ENCODE measurements at regions of chr16 and their contacts with region 1.

Region 1: GRCh38 chr16:74998481-74999218 is at the start of gene ZNRF1:
- DNase-seq: peak; percentile 89 to 95 (median 92)
- H3K4me3 ChIP-seq: peak within 1 kb of the TSS; percentile 73 to 83 (median 74)
- H3K27ac ChIP-seq: peak within 1 kb of the TSS; percentile 83 to 84
- H3K4me1 ChIP-seq: peaks cover 0 to 17% (median 0%) of the 10 kb centered on the region in 3 donors
- H3K27me3 ChIP-seq: no peaks in the 10 kb centered on the region
- CTCF ChIP-seq: peak; percentile 74
- total RNA-seq, gene ZNRF1: 23.1 TPM

Region 2: DNA sequence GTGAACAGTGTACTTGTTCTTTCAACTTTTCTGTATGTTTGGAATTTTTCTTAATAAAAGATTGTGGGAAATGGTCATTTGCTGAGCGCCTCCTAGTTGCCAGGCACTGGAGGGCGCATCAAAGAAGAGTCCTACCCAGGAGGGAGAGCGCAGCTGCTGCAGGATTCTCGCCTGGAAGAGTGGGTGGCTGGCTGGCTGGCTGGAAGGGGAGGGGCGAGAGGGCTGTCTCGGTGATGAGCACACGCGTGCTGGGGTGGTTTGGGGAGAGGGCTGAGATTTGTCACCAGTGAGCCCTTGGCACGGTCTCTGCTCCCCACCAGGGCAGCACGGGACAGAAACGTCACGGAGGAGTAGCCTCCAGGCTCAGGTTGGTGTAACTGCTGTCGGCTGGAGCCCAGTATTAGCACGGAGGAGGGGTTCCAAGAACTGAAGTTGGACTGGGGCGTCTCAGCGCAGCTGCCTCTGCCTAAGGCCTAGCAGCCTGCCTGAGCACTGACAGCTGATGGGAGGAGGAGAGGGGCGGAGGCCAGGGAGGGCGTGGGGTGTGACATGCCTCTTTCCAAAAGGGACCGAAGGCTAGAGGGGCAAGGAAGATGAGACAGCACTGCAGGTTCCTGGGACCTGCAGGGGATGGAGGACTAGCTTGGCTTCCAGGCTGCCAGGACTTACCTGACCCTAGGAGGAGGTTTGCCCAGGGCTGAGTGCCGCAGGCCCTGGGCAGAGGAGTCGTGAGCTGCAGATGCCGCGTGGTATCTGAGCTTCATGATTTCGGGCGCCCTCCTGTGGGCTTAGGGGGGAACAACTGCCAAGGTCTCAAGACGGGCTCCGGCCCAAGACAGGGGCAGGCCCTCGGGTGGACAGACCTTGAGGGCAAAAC is 112.2 kb after region 1 on chr16:
- intact Hi-C with region 1: loop called (anchors 5 kb)
- DNase-seq: peak; percentile 89 to 97 (median 93)
- H3K4me3 ChIP-seq: peak overlapping the region in 1 of 3 donors; percentile 11
- H3K27ac ChIP-seq: peak overlapping the region; percentile 86 to 93
- H3K4me1 ChIP-seq: peaks cover 0 to 40% (median 34%) of the 10 kb centered on the region in 3 donors
- H3K27me3 ChIP-seq: no peaks in the 10 kb centered on the region
- CTCF ChIP-seq: peak; percentile 88

Measured in kidney (tissue), 22 donors.